ENCODE measurements at regions of chr10 and their contacts with region 1.

Region 1: GRCh38 chr10:28087661-28088351 is 88.9 kb upstream of the ODAD2 start:
- DNase-seq: peak; percentile 44
- H3K4me3 ChIP-seq: no peak overlapping the region
- H3K27ac ChIP-seq: peak overlapping the region; percentile 99
- H3K4me1 ChIP-seq: peaks cover 40% of the 10 kb centered on the region
- H3K27me3 ChIP-seq: no peaks in the 10 kb centered on the region
- CTCF ChIP-seq: no peak
- POLR2A ChIP-seq: no peak

Region 2: GRCh38 chr10:27783660-27784059 is 304.1 kb before region 1 on chr10:
- CTCF ChIA-PET with region 1: interaction called, 5 read pairs
- POLR2A ChIA-PET with region 1: no interaction called
- dilution Hi-C with region 1: no loop called
- intact Hi-C with region 1: loop called (anchors 1 kb)
- DNase-seq: peak; percentile 64
- H3K4me3 ChIP-seq: no peak overlapping the region
- H3K27ac ChIP-seq: no peak overlapping the region
- H3K4me1 ChIP-seq: no peaks in the 10 kb centered on the region
- H3K27me3 ChIP-seq: peaks cover 3 to 5% of the 10 kb centered on the region in 2 experiments
- CTCF ChIP-seq: peak; percentile 54 to 68
- POLR2A ChIP-seq: no peak

Region 3: DNA sequence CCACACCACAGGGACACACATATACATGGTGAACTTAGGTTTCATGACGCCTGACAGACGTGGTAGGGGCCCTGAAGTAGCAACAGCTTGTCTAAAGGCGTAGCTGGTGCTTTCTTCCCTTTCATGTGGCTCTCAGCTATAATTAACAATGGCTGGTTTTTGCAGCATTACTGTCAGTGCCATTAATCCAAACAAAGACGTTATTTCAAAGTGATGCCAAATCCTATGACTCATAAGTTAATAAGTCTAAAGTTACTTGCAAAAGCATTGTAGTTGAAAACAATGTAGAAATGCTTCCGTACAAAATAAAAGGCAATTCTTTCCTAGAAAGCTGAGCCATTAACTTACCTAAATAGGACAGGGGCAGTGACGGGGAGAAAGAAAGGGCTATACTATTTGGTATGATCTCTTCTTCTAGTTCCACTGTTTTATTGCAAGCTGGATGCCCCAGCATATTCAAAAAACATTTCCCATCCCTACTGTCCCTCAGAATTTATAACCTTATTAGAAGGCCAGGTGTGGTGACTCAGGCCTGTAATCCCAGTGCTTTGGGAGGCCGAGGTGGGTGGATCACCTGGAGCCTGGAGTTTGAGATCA is 194.3 kb before region 1 on chr10:
- CTCF ChIA-PET with region 1: no interaction called
- POLR2A ChIA-PET with region 1: no interaction called
- dilution Hi-C with region 1: no loop called
- intact Hi-C with region 1: no loop called
- DNase-seq: peak; percentile 75
- H3K4me3 ChIP-seq: no peak overlapping the region
- H3K27ac ChIP-seq: no peak overlapping the region
- H3K4me1 ChIP-seq: peaks cover 8% of the 10 kb centered on the region
- H3K27me3 ChIP-seq: no peaks in the 10 kb centered on the region
- CTCF ChIP-seq: no peak
- POLR2A ChIP-seq: no peak

Region 4: GRCh38 chr10:28054228-28054837 is 33.5 kb before region 1 on chr10:
- CTCF ChIA-PET with region 1: no interaction called
- POLR2A ChIA-PET with region 1: no interaction called
- dilution Hi-C with region 1: no loop called
- intact Hi-C with region 1: loop called (anchors 1 kb)
- DNase-seq: peak; percentile 49
- H3K4me3 ChIP-seq: no peak overlapping the region
- H3K27ac ChIP-seq: peak overlapping the region; percentile 29
- H3K4me1 ChIP-seq: peaks cover 12% of the 10 kb centered on the region
- H3K27me3 ChIP-seq: no peaks in the 10 kb centered on the region
- CTCF ChIP-seq: no peak
- POLR2A ChIP-seq: no peak

Region 5: DNA sequence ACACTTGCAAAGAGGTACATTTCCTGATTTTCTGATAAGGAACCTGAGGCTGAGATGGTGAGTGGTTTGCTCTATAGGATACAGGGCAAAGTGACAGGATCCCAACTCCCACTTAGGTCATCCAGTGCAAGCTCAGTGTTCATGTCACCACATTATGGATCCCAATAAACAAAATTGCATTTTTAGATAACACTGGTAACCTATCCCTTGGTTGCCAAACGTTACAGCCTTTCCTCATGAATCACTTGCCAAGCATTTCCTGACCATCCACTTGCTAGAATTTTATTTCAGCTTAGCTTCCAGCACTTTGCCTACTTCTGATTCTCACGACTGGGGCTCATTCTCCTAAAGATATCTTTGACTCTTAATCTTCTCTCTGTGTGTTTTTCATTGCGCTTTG is 42.5 kb after region 1 on chr10:
- CTCF ChIA-PET with region 1: interaction called, 3 read pairs
- POLR2A ChIA-PET with region 1: no interaction called
- dilution Hi-C with region 1: no loop called
- intact Hi-C with region 1: loop called (anchors 1 kb)
- DNase-seq: peak; percentile 79
- H3K4me3 ChIP-seq: peak overlapping the region in 1 of 3 experiments; percentile 34
- H3K27ac ChIP-seq: peak overlapping the region; percentile 90
- H3K4me1 ChIP-seq: peaks cover 20% of the 10 kb centered on the region
- H3K27me3 ChIP-seq: no peaks in the 10 kb centered on the region
- CTCF ChIP-seq: no peak
- POLR2A ChIP-seq: no peak

Region 6: DNA sequence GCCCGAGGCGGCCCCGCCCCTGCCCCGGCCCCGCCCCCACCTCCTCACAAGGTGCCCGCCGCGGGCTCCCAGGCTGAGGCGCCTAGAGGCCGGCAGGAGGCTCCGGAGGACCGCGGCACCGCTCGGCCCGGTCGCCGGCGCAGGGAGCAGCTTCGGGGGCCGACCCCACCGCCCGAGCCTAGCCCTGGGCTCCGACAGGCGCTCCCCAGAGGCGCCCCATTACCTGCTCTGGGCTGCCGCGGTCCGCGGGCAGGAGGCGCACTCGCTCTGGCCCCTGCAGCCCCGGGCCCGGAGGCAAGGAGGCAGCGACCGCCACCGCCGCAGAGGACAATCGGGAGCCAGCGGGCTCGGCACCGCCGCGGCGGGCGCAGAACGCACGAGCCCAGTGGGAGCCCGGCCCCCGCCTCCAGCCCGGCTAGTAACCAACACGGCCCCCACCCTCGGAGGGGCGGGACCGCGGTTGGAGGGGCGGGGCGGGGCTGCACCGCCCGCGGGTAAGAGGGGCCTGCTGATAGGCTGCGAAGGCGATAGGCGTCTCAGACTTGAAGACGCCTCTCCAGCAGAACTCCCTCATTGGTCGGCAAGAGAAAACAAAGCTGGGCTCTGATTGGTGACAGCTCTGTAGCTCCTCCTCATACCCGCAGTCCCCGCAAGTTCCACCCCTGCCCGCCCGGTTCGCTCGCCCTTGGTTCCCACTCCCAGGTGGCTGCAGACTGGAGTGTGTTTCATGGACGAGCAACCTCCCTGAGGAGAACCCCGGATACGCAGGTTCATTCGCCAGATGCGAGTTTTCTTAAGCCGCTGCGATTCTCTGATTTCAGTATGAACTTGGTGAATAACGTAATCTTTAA is 215.1 kb after region 1 on chr10 and contains the start of gene MPP7:
- CTCF ChIA-PET with region 1: no interaction called
- POLR2A ChIA-PET with region 1: no interaction called
- dilution Hi-C with region 1: no loop called
- intact Hi-C with region 1: loop called (anchors 5 kb)
- DNase-seq: peak; percentile 98
- H3K4me3 ChIP-seq: peak within 1 kb of the TSS; percentile 56 to 78 (median 63)
- H3K27ac ChIP-seq: no peak within 1 kb of the TSS
- H3K4me1 ChIP-seq: peaks cover 6% of the 10 kb centered on the region
- H3K27me3 ChIP-seq: peaks cover 23 to 41% of the 10 kb centered on the region in 2 experiments
- CTCF ChIP-seq: no peak
- POLR2A ChIP-seq: no peak
- total RNA-seq, gene MPP7: 0.73 and 1.0 TPM in 2 replicates

Measured in endothelial cell of umbilical vein (primary cell).